Left ventricle myocardium superior (tissue), 1 donor: ENCODE measurements at regions of chr21 and their contacts with region 1.

Region 1: DNA sequence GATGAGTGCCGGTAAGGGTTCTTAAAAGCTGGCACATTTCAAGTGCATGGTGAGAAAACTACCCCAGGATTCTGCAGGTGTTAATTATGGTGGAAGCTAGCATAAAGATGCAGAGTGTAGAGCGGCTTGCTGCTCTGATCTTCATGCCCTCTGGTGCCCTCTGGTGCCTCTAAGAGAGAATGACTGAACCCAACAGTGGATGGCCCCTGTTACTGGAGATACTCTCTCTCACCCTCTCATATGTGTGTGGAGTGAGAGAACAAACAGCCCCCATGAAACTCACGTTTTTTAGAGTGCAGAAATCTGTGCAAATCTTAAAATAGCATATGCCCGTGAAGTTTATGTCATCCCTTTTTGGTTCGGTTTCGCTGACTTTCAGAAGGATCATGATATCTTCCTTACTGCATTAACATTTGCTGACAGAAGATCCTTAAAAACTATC is 90.0 kb downstream of the GRIK1 start:
- DNase-seq: peak; percentile 30
- ATAC-seq: peak; percentile 80

Region 2: GRCh38 chr21:29372063-29372802 is 477.5 kb before region 1 on chr21:
- intact Hi-C with region 1: no loop called
- DNase-seq: no peak
- ATAC-seq: peak; percentile 94

Region 3: GRCh38 chr21:29481641-29482040 is 368.1 kb before region 1 on chr21:
- intact Hi-C with region 1: loop called (anchors 10 kb)
- DNase-seq: no peak
- ATAC-seq: no peak

Region 4: DNA sequence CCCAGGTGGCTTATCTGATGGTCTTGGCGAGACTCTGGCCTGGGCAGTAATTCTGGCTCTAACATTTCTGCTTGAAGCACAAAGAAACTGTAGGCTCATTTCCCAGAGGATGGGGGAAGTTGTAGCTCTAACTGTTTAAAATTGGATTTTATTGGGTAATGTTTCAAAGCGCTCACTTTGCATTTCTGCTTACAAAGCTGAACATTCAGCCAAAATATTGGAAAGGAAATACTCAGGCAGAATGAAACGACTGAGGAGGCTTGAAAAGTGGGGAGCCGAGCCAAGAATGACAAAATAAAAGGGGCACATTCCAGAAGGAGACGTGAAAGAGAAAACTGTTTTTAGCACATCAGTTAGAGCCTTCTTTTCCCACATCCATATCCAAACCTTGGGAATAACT is 112.6 kb before region 1 on chr21:
- intact Hi-C with region 1: no loop called
- DNase-seq: no peak
- ATAC-seq: no peak

Region 5: DNA sequence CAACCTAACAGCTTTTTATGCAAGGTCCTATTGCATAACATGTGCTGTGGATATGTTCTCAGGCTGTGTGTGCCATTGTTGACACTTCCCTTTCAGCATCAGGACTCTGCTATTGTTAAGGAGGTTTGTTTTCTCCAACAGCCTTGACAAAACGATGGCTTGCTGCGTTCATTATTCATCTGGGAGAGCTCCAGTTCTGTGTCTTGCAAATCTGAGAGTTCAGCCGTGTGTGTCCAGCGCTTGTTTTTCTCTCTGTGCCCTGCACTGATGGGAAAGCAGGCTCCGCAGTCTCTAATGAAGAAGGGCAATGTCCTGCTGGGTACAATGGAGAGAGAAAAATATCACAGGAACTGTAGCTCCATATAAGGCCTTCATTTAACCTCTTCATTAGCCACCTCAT is 253.1 kb after region 1 on chr21:
- intact Hi-C with region 1: no loop called
- DNase-seq: no peak
- ATAC-seq: no peak